GM10248 (cell line): ENCODE measurements at regions of chr10 and their contacts with region 1.

Region 1: GRCh38 chr10:88293073-88293472 is 290.0 kb downstream of the RNLS start:
- DNase-seq: no peak
- CTCF ChIP-seq: no peak

Region 2: GRCh38 chr10:88281592-88282347 is 11.3 kb before region 1 on chr10:
- CTCF ChIA-PET with region 1: interaction called, 12 read pairs
- POLR2A ChIA-PET with region 1: no interaction called
- DNase-seq: peak; percentile 25
- CTCF ChIP-seq: no peak